ENCODE measurements at regions of chr20 and their contacts with region 1.

Region 1: GRCh38 chr20:61234008-61234802 is 17.9 kb upstream of the CDH4 start:
- DNase-seq: no peak
- ATAC-seq: no peak
- H3K4me3 ChIP-seq: no peak overlapping the region
- H3K27ac ChIP-seq: no peak overlapping the region
- H3K4me1 ChIP-seq: no peaks in the 10 kb centered on the region
- CTCF ChIP-seq: no peak
- EP300 ChIP-seq: no peak
- POLR2A ChIP-seq: no peak
- RAD21 ChIP-seq: no peak

Region 2: DNA sequence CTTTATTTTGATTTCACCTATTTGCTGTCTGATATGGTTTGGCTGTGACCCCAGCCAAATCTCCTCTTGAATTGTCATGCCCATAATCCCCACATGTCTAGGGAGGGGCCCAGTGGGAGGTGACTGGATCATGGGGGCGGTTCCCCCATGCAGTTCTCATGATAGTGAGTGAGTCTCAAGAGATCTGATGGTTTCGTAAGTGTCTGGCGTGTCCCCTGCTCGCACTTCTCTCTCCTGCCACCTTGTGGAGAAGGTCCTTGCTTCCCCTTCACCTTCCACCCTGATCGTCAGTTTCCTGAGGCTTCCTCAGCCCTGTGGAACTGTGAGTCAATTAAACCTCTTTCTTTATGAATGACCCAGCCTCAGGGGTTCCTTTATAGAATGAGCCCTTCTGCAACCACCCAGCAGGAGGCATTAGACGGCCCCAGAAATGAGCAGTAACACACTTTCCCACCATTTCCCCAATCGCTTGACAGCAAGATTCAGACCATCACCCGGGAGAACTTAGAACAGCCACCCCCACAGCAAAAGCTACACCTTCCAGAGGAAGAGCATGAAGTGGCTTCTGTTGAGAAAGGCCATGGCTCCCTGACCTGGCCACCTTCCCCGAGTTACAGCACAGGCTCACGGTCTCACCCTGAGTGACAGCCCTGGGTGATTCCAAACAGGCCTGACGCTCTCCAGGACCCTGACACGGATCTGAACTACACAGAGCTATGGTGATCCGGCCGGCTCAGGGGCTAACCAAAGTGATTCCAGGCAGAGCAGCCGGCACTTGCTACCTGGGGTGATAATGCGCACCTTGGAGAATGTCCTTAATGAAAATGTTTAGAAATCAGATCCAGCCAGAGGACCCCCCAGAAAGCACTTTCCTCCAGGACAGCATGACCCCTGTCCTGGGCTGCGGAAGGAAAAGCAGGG is 113.3 kb before region 1 on chr20:
- CTCF ChIA-PET with region 1: interaction called, 10 read pairs
- POLR2A ChIA-PET with region 1: no interaction called
- DNase-seq: peak in 1 of 2 experiments; percentile 92
- ATAC-seq: peak; percentile 8 to 66; a peak in 3 of 6 replicates
- H3K4me3 ChIP-seq: no peak overlapping the region
- H3K27ac ChIP-seq: peak overlapping the region; percentile 86 to 93
- H3K4me1 ChIP-seq: peaks cover 53% of the 10 kb centered on the region
- CTCF ChIP-seq: peak; percentile 66
- EP300 ChIP-seq: 0 out of 5 replicates have a peak, but pooled peaks of 1 of the 2 experiments have one; percentile 24
- POLR2A ChIP-seq: no peak
- RAD21 ChIP-seq: peak; percentile 79 to 80

Region 3: DNA sequence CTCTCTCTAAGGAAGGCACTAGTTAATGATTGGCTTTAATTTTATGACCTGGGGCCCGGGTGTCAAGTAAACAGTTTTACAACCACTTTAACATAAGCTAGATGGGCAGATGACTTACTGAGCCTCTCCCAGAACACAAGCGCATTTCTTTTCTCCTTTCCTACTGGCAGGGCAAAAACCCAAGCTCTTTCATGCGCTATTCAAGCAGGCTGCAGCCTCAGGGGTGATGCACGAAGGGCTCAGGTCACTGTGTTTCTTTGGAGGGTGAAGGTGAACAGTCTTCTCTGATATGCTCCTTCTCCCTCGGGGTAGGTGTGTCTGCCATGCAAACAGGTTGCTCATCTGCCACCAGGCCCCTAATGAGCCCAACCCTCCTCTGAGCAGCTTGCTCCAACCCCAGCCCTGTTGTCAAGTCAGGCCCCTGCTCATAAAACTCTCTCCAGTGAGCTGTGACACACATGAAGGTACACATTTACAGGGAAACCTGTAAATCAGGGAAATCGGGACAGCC is 55.6 kb before region 1 on chr20:
- CTCF ChIA-PET with region 1: interaction called, 13 read pairs
- POLR2A ChIA-PET with region 1: no interaction called
- DNase-seq: no peak
- ATAC-seq: no peak
- H3K4me3 ChIP-seq: no peak overlapping the region
- H3K27ac ChIP-seq: peak overlapping the region in 1 of 2 experiments; percentile 47; a peak in 1 of 6 replicates
- H3K4me1 ChIP-seq: peaks cover 10% of the 10 kb centered on the region
- CTCF ChIP-seq: no peak
- EP300 ChIP-seq: no peak
- POLR2A ChIP-seq: no peak
- RAD21 ChIP-seq: no peak

Region 4: GRCh38 chr20:61191096-61191495 is 43.1 kb before region 1 on chr20:
- CTCF ChIA-PET with region 1: interaction called, 17 read pairs
- POLR2A ChIA-PET with region 1: no interaction called
- DNase-seq: no peak
- ATAC-seq: no peak
- H3K4me3 ChIP-seq: no peak overlapping the region
- H3K27ac ChIP-seq: peak overlapping the region; percentile 47 to 56; a peak in 4 of 6 replicates
- H3K4me1 ChIP-seq: peaks cover 35% of the 10 kb centered on the region
- CTCF ChIP-seq: no peak
- EP300 ChIP-seq: no peak
- POLR2A ChIP-seq: no peak
- RAD21 ChIP-seq: no peak

Region 5: GRCh38 chr20:61253264-61253639 is 19.0 kb after region 1 on chr20:
- CTCF ChIA-PET with region 1: interaction called, 32 read pairs
- POLR2A ChIA-PET with region 1: no interaction called
- DNase-seq: peak; percentile 45 to 60
- ATAC-seq: peak; percentile 74 to 79
- H3K4me3 ChIP-seq: peak overlapping the region; percentile 76
- H3K27ac ChIP-seq: peak overlapping the region; percentile 71 to 95
- H3K4me1 ChIP-seq: peaks cover 14% of the 10 kb centered on the region; the same call in 2 of the 3 replicates
- CTCF ChIP-seq: no peak; the same call in 2 of the 3 replicates
- EP300 ChIP-seq: no peak
- POLR2A ChIP-seq: no peak
- RAD21 ChIP-seq: peak; percentile 17 to 21; a peak in 1 of 5 replicates

Measured in A549 (cell line).